Mammary epithelial cell (primary cell): ENCODE measurements at regions of chr2 and their contacts with region 1.

Region 1: DNA sequence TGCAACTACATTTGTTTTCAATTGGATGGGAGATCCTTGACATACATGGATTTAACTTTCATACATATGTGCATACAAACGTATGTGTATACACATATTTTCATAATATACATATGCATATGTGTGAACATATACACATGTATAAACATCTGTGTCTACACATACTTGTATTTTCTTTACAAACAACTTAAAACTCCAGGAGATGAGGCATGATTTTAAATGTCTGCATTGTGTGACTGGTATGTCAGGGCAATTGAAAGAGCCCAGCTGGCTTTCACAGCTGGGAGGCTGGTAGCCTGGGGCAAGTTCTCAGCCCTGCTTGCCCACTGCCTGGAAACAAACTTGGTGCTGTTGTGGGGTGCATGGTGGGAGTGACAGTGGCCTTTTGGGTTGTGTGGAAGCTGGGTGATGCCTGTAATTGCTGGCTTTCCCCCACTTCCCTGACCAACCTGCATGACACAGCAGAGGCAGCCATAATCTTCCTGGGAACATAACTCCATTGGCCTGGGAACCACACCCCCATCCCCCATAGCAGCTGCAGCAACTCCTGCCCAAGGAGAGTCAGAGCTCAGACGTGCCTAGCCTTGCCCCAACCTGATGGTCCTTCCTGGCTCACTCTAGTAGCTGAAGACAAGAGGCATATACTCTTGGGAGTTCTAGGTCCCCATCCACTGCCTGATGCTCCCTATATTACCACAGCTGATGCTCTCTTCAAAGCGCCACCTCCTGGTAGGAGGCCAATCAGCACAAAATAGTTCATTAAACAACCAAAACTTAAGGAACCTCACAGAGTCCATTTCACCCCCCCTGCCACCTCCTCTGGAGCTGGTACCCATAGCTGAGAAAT is 158.3 kb downstream of the CERS6 start:
- DNase-seq: peak; percentile 96
- H3K4me3 ChIP-seq: no peak overlapping the region
- H3K27ac ChIP-seq: peak overlapping the region; percentile 84
- H3K4me1 ChIP-seq: peaks cover 27% of the 10 kb centered on the region
- H3K27me3 ChIP-seq: no peaks in the 10 kb centered on the region
- CTCF ChIP-seq: peak; percentile 39 to 42

Region 2: GRCh38 chr2:168521053-168521741 is 93.2 kb before region 1 on chr2:
- CTCF ChIA-PET with region 1: no interaction called
- dilution Hi-C with region 1: no loop called
- in situ Hi-C with region 1: no loop called
- intact Hi-C with region 1: loop called (anchors 2 kb)
- DNase-seq: no peak
- H3K4me3 ChIP-seq: no peak overlapping the region
- H3K27ac ChIP-seq: peak overlapping the region; percentile 6
- H3K4me1 ChIP-seq: peaks cover 63% of the 10 kb centered on the region
- H3K27me3 ChIP-seq: no peaks in the 10 kb centered on the region
- CTCF ChIP-seq: no peak

Region 3: GRCh38 chr2:168536925-168537466 is 77.4 kb before region 1 on chr2:
- CTCF ChIA-PET with region 1: no interaction called
- dilution Hi-C with region 1: no loop called
- in situ Hi-C with region 1: no loop called
- intact Hi-C with region 1: no loop called
- DNase-seq: no peak
- H3K4me3 ChIP-seq: no peak overlapping the region
- H3K27ac ChIP-seq: no peak overlapping the region
- H3K4me1 ChIP-seq: peaks cover 25% of the 10 kb centered on the region
- H3K27me3 ChIP-seq: no peaks in the 10 kb centered on the region
- CTCF ChIP-seq: no peak

Region 4: GRCh38 chr2:168632709-168633121 is 18.3 kb after region 1 on chr2:
- CTCF ChIA-PET with region 1: no interaction called
- dilution Hi-C with region 1: no loop called
- in situ Hi-C with region 1: no loop called
- intact Hi-C with region 1: no loop called
- DNase-seq: no peak
- H3K4me3 ChIP-seq: no peak overlapping the region
- H3K27ac ChIP-seq: no peak overlapping the region
- H3K4me1 ChIP-seq: no peaks in the 10 kb centered on the region
- H3K27me3 ChIP-seq: no peaks in the 10 kb centered on the region
- CTCF ChIP-seq: no peak

Region 5: GRCh38 chr2:168671932-168672331 is 57.5 kb after region 1 on chr2:
- CTCF ChIA-PET with region 1: no interaction called
- dilution Hi-C with region 1: no loop called
- in situ Hi-C with region 1: no loop called
- intact Hi-C with region 1: no loop called
- DNase-seq: peak; percentile 68
- H3K4me3 ChIP-seq: no peak overlapping the region
- H3K27ac ChIP-seq: no peak overlapping the region
- H3K4me1 ChIP-seq: peaks cover under 1% of the 10 kb centered on the region
- H3K27me3 ChIP-seq: no peaks in the 10 kb centered on the region
- CTCF ChIP-seq: no peak

Region 6: DNA sequence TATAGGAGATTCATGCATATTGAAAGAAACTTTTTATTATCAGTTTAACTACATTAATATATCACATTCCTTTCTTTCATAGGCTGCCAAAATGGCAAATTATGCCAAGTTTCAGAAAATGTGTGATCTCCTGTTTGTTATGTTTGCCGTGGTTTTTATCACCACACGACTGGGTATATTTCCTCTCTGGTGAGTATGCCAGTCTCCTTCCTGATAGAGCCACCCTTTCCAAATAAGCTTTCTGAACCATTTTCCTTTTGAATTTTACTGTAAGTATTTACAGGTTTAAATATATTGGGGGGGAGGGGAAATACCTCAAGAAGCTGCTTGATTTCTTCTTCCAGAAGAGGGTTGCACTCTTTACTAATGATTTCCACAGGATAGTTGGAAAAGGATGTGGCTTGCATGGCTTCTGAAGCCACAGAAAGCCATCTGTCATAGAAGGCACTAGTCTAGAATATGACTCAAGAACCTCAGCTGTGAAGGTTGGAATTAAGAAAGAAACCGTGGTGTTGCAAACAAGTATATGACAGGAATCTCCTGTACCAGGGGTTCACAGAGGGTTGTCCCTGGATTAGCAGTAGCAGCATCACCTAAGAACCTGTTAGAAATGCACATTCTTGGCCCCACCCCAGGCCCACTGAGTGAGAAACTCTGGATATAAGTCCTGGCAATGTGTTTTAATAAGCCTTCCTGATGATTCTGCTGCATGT is 103.6 kb after region 1 on chr2:
- CTCF ChIA-PET with region 1: no interaction called
- dilution Hi-C with region 1: loop called (anchors 5 kb)
- in situ Hi-C with region 1: no loop called
- intact Hi-C with region 1: no loop called
- DNase-seq: peak; percentile 73
- H3K4me3 ChIP-seq: no peak overlapping the region
- H3K27ac ChIP-seq: peak overlapping the region; percentile 95
- H3K4me1 ChIP-seq: peaks cover 50% of the 10 kb centered on the region
- H3K27me3 ChIP-seq: no peaks in the 10 kb centered on the region
- CTCF ChIP-seq: no peak

Region 7: DNA sequence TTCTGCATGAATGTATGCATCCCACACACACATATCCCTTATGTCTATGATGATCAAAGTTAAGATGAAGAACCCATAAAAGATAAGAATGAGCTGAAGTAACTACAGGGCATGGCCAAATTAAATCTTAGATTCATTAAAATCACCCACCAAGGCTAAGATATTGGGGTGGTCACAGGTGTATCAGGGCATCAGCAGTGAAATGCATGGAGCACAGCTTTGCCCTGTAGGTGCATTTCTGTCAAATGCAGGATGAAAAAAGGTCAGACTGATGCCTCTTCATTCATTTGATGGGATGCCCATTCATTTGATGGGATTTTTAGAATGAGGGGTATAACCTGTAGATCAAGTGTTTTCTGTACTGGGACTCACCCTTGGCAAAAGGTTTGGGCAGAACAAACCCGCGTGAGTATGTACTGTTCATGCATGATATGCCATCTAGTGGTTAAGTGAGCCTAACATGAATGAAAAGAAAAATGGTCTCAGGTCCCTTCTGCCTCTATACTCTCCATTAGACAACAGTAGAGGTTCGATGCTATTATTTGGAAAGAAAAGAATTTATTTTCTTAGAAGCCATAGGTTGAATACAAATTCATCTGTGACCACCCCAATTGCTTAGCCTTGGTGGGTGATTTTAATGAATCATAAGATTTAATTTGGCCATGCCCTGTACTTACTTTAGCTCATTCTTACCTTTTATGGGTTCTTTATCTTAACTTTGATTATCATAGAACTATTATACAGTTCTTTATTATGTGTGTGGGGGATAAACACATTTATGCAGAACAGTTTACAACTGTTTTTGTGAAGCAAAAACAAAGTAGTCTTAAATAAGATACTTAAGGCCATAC is 144.8 kb after region 1 on chr2:
- CTCF ChIA-PET with region 1: no interaction called
- dilution Hi-C with region 1: no loop called
- in situ Hi-C with region 1: no loop called
- intact Hi-C with region 1: loop called (anchors 10 kb)
- DNase-seq: peak; percentile 45
- H3K4me3 ChIP-seq: no peak overlapping the region
- H3K27ac ChIP-seq: no peak overlapping the region
- H3K4me1 ChIP-seq: no peaks in the 10 kb centered on the region
- H3K27me3 ChIP-seq: no peaks in the 10 kb centered on the region
- CTCF ChIP-seq: peak; percentile 58 to 65

Region 8: GRCh38 chr2:168896783-168897182 is 282.4 kb after region 1 on chr2:
- CTCF ChIA-PET with region 1: no interaction called
- dilution Hi-C with region 1: no loop called
- in situ Hi-C with region 1: no loop called
- intact Hi-C with region 1: no loop called
- DNase-seq: no peak
- H3K4me3 ChIP-seq: no peak overlapping the region
- H3K27ac ChIP-seq: no peak overlapping the region
- H3K4me1 ChIP-seq: no peaks in the 10 kb centered on the region
- H3K27me3 ChIP-seq: peaks cover 2% of the 10 kb centered on the region
- CTCF ChIP-seq: no peak

Region 9: DNA sequence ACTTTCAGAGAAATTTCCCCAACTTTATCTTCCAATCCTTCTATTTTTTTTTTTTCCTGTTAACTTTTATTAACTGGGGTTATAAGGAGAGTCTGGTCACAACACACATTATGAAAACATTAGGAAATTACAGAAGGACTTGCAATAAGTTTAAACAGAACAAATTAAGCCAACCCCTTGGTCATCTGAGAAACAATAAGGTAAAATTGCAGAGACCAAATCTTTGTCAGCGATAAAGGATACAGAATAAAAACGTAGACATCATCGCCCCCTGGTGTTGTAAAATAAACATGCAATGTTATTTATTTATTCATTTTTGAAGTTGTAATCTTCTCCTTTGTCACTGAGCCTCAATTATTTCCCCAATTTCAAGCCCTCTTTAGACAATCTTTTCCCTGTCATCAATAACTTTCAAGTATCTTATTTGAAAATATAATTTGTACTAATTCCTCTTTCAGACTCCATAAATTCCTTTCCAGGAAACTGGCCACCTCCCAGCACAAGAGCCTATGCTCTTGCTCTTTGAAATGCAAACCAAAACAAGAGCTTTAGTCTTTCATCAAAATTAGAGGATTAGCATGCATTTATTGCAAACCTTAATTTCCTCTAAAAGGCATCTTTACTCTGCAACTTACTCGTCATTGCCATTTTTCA is 306.2 kb after region 1 on chr2:
- CTCF ChIA-PET with region 1: no interaction called
- dilution Hi-C with region 1: no loop called
- in situ Hi-C with region 1: no loop called
- intact Hi-C with region 1: loop called (anchors 10 kb)
- DNase-seq: no peak
- H3K4me3 ChIP-seq: no peak overlapping the region
- H3K27ac ChIP-seq: no peak overlapping the region
- H3K4me1 ChIP-seq: no peaks in the 10 kb centered on the region
- H3K27me3 ChIP-seq: peaks cover under 1% of the 10 kb centered on the region
- CTCF ChIP-seq: peak; percentile 40 to 52